A673 (cell line): ENCODE measurements at regions of chr10 and their contacts with region 1.

Region 1: GRCh38 chr10:53412651-53413050 is 640.1 kb upstream of the MBL2 start:
- DNase-seq: no peak
- H3K4me3 ChIP-seq: no peak overlapping the region
- H3K27ac ChIP-seq: no peak overlapping the region
- H3K4me1 ChIP-seq: no peaks in the 10 kb centered on the region
- H3K27me3 ChIP-seq: no peaks in the 10 kb centered on the region
- CTCF ChIP-seq: no peak

Region 2: GRCh38 chr10:51718804-51719291 is 1693.8 kb before region 1 on chr10:
- CTCF ChIA-PET with region 1: no interaction called
- POLR2A ChIA-PET with region 1: no interaction called
- intact Hi-C with region 1: no loop called
- DNase-seq: no peak
- H3K4me3 ChIP-seq: no peak overlapping the region
- H3K27ac ChIP-seq: no peak overlapping the region
- H3K4me1 ChIP-seq: no peaks in the 10 kb centered on the region
- H3K27me3 ChIP-seq: no peaks in the 10 kb centered on the region
- CTCF ChIP-seq: no peak

Region 3: GRCh38 chr10:52332815-52333214 is 1079.8 kb before region 1 on chr10:
- CTCF ChIA-PET with region 1: interaction called, 13 read pairs
- POLR2A ChIA-PET with region 1: no interaction called
- intact Hi-C with region 1: no loop called
- DNase-seq: peak; percentile 22
- H3K4me3 ChIP-seq: no peak overlapping the region
- H3K27ac ChIP-seq: no peak overlapping the region
- H3K4me1 ChIP-seq: peaks cover 16% of the 10 kb centered on the region
- H3K27me3 ChIP-seq: no peaks in the 10 kb centered on the region
- CTCF ChIP-seq: no peak